ENCODE measurements at regions of chr9 and their contacts with region 1.

Region 1: DNA sequence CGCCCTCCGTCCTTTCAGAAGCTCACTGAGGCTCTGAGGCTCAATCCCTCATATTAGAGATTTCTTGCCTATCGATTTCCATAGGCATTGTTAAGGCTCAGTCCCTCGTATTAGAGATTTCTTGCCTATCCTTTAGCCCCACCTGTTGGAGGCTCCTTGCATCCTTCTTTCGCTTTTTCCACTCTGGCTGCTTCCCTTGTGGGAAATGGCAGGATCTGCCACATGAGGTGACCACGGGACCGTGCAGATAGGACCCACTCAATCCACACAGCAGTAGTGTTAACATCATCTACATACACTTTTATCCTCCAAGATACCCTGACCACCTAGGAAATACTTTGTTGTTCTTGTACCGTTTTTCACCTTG is 19.5 kb downstream of the IFT74 start:
- DNase-seq: peak; percentile 26 to 47
- H3K4me3 ChIP-seq: peak overlapping the region; percentile 24
- H3K4me3 Mint-ChIP-seq: peak overlapping the region; percentile 62
- H3K27ac Mint-ChIP-seq: no peak overlapping the region
- H3K4me1 ChIP-seq: no peaks in the 10 kb centered on the region
- H3K4me1 Mint-ChIP-seq: no peaks in the 10 kb centered on the region
- H3K27me3 ChIP-seq: no peaks in the 10 kb centered on the region
- H3K27me3 Mint-ChIP-seq: no peaks in the 10 kb centered on the region
- CTCF ChIP-seq: peak in 1 of 2 experiments; percentile 39

Region 2: GRCh38 chr9:26723486-26723885 is 252.2 kb before region 1 on chr9:
- CTCF ChIA-PET with region 1: no interaction called
- POLR2A ChIA-PET with region 1: no interaction called
- intact Hi-C with region 1: no loop called
- DNase-seq: peak in 1 of 2 experiments; percentile 13
- H3K4me3 ChIP-seq: no peak overlapping the region
- H3K4me3 Mint-ChIP-seq: no peak overlapping the region
- H3K27ac Mint-ChIP-seq: no peak overlapping the region
- H3K4me1 ChIP-seq: no peaks in the 10 kb centered on the region
- H3K4me1 Mint-ChIP-seq: no peaks in the 10 kb centered on the region
- H3K27me3 ChIP-seq: no peaks in the 10 kb centered on the region
- H3K27me3 Mint-ChIP-seq: no peaks in the 10 kb centered on the region
- CTCF ChIP-seq: no peak

Region 3: GRCh38 chr9:26744191-26744965 is 231.3 kb before region 1 on chr9:
- CTCF ChIA-PET with region 1: no interaction called
- POLR2A ChIA-PET with region 1: no interaction called
- intact Hi-C with region 1: loop called (anchors 1 kb)
- DNase-seq: no peak
- H3K4me3 ChIP-seq: no peak overlapping the region
- H3K4me3 Mint-ChIP-seq: no peak overlapping the region
- H3K27ac Mint-ChIP-seq: no peak overlapping the region
- H3K4me1 ChIP-seq: no peaks in the 10 kb centered on the region
- H3K4me1 Mint-ChIP-seq: no peaks in the 10 kb centered on the region
- H3K27me3 ChIP-seq: no peaks in the 10 kb centered on the region
- H3K27me3 Mint-ChIP-seq: peaks cover 6% of the 10 kb centered on the region
- CTCF ChIP-seq: peak in 1 of 2 experiments; percentile 34

Region 4: DNA sequence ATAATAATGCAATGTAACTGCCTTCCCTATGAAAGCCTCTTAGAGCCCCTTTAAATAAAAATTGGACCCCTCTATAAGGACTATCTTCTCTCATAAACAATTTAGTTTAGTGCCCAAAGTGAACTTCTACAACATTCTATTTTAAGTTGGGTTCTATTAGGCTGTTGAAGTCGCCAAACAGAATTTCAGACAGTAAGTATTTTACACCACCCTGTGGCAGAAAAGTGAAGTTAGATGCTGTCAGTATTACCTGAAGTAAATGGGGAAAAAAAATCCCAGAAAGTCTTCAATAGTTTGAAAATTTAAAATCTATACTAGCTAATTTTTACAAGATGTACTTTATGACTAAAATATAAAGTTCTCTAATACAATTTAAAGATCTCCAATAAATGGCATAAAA is 112.6 kb before region 1 on chr9:
- CTCF ChIA-PET with region 1: no interaction called
- POLR2A ChIA-PET with region 1: no interaction called
- intact Hi-C with region 1: loop called (anchors 10 kb)
- DNase-seq: no peak
- H3K4me3 ChIP-seq: no peak overlapping the region
- H3K4me3 Mint-ChIP-seq: no peak overlapping the region
- H3K27ac Mint-ChIP-seq: no peak overlapping the region
- H3K4me1 ChIP-seq: no peaks in the 10 kb centered on the region
- H3K4me1 Mint-ChIP-seq: no peaks in the 10 kb centered on the region
- H3K27me3 ChIP-seq: no peaks in the 10 kb centered on the region
- H3K27me3 Mint-ChIP-seq: no peaks in the 10 kb centered on the region
- CTCF ChIP-seq: peak in 1 of 2 experiments; percentile 13

Region 5: GRCh38 chr9:27019589-27019988 is 43.9 kb after region 1 on chr9:
- CTCF ChIA-PET with region 1: no interaction called
- POLR2A ChIA-PET with region 1: no interaction called
- intact Hi-C with region 1: no loop called
- DNase-seq: no peak
- H3K4me3 ChIP-seq: no peak overlapping the region
- H3K4me3 Mint-ChIP-seq: no peak overlapping the region
- H3K27ac Mint-ChIP-seq: no peak overlapping the region
- H3K4me1 ChIP-seq: no peaks in the 10 kb centered on the region
- H3K4me1 Mint-ChIP-seq: no peaks in the 10 kb centered on the region
- H3K27me3 ChIP-seq: no peaks in the 10 kb centered on the region
- H3K27me3 Mint-ChIP-seq: no peaks in the 10 kb centered on the region
- CTCF ChIP-seq: no peak